GM12878 (cell line): ENCODE measurements at regions of chrX and their contacts with region 1.

Region 1: GRCh38 chrX:114599911-114600310 is 16.0 kb downstream of the HTR2C start:
- DNase-seq: no peak
- ATAC-seq: no peak
- H3K4me3 ChIP-seq: no peak overlapping the region
- H3K27ac ChIP-seq: no peak overlapping the region
- H3K4me1 ChIP-seq: no peaks in the 10 kb centered on the region
- H3K27me3 ChIP-seq: no peaks in the 10 kb centered on the region
- CTCF ChIP-seq: no peak
- EP300 ChIP-seq: no peak
- POLR2A ChIP-seq: no peak
- RAD21 ChIP-seq: no peak

Region 2: GRCh38 chrX:114472788-114473187 is 127.1 kb before region 1 on chrX:
- CTCF ChIA-PET with region 1: no interaction called
- POLR2A ChIA-PET with region 1: no interaction called
- RAD21 ChIA-PET with region 1: no interaction called
- SMC1A ChIA-PET with region 1: no interaction called
- in situ Hi-C with region 1: no loop called
- intact Hi-C with region 1: loop called (anchors 5 kb)
- DNase-seq: no peak
- ATAC-seq: no peak
- H3K4me3 ChIP-seq: no peak overlapping the region
- H3K27ac ChIP-seq: no peak overlapping the region
- H3K4me1 ChIP-seq: no peaks in the 10 kb centered on the region
- H3K27me3 ChIP-seq: no peaks in the 10 kb centered on the region
- CTCF ChIP-seq: no peak
- EP300 ChIP-seq: no peak
- POLR2A ChIP-seq: no peak
- RAD21 ChIP-seq: no peak